PC-9 (cell line): ENCODE measurements at regions of chr3 and their contacts with region 1.

Region 1: GRCh38 chr3:66115858-66116654 is 77.3 kb upstream of the MAGI1 start:
- DNase-seq: peak; percentile 76 to 93
- H3K4me3 ChIP-seq: no peak overlapping the region
- H3K27ac ChIP-seq: peak overlapping the region; percentile 72
- H3K4me1 ChIP-seq: peaks cover 21% of the 10 kb centered on the region
- H3K27me3 ChIP-seq: no peaks in the 10 kb centered on the region
- CTCF ChIP-seq: no peak

Region 2: DNA sequence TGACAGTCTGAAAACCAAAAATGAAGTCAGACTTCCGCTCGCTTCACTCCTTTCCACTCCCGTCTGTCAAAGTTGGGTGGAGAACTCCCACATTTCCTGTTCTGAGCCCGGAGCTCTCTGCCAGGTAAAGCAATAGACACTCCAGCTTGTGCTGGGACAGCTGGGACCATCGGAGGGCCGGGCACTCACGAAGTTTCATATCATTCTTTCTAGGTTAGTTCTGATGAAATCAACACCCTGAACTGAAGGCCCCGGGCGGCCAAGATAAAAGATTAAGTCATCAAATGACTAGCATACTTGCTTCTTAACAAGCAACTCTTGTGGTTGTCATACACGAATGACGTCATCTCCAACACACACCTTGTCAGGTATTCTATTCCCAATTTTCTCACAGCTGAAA is 119.5 kb before region 1 on chr3:
- CTCF ChIA-PET with region 1: no interaction called
- POLR2A ChIA-PET with region 1: no interaction called
- intact Hi-C with region 1: loop called (anchors 5 kb)
- DNase-seq: peak; percentile 80 to 96
- H3K4me3 ChIP-seq: peak overlapping the region; percentile 17; the same call in 1 of the 2 replicates
- H3K27ac ChIP-seq: peak overlapping the region; percentile 75
- H3K4me1 ChIP-seq: peaks cover 25% of the 10 kb centered on the region
- H3K27me3 ChIP-seq: no peaks in the 10 kb centered on the region
- CTCF ChIP-seq: no peak